Activated B cell treated with CpG ODN at 0.5 μM for 24 hours (primary cell): ENCODE measurements at regions of chr14 and their contacts with region 1.

Region 1: DNA sequence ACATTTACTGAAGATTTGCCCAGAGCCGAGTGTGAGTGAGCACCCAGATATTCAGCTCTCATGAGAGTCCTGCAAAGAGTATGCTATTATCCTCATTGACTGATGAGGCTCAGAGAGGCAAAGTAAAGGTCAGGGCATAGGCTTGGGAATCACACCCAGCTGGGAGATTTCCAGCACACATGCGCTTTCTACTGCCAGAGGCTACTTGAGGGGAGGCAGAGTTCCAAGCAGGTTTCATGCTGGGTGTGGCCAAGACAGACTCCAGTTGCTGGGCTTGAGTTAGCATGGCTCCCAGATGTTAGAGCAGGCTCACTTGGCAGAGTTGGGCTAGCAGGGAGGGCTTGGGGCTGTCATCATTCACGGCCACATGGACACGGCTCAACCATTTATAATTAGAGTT is 14.4 kb upstream of the FAM181A start:
- DNase-seq: no peak
- ATAC-seq: no peak
- H3K4me3 Mint-ChIP-seq: no peak overlapping the region
- H3K27ac Mint-ChIP-seq: no peak overlapping the region
- H3K4me1 Mint-ChIP-seq: no peaks in the 10 kb centered on the region
- H3K27me3 Mint-ChIP-seq: peaks cover 6% of the 10 kb centered on the region
- CTCF ChIP-seq: no peak

Region 2: GRCh38 chr14:93901813-93902212 is 11.0 kb before region 1 on chr14:
- CTCF ChIA-PET with region 1: no interaction called
- POLR2A ChIA-PET with region 1: no interaction called
- intact Hi-C with region 1: loop called (anchors 1 kb)
- DNase-seq: no peak
- ATAC-seq: no peak
- H3K4me3 Mint-ChIP-seq: no peak overlapping the region
- H3K27ac Mint-ChIP-seq: no peak overlapping the region
- H3K4me1 Mint-ChIP-seq: no peaks in the 10 kb centered on the region
- H3K27me3 Mint-ChIP-seq: peaks cover 8% of the 10 kb centered on the region
- CTCF ChIP-seq: no peak

Region 3: GRCh38 chr14:93954900-93955849 is 42.4 kb after region 1 on chr14:
- CTCF ChIA-PET with region 1: no interaction called
- POLR2A ChIA-PET with region 1: no interaction called
- intact Hi-C with region 1: no loop called
- DNase-seq: no peak
- ATAC-seq: peak; percentile 34
- H3K4me3 Mint-ChIP-seq: peak overlapping the region; percentile 75
- H3K27ac Mint-ChIP-seq: peak overlapping the region; percentile 76
- H3K4me1 Mint-ChIP-seq: peaks cover 70% of the 10 kb centered on the region
- H3K27me3 Mint-ChIP-seq: no peaks in the 10 kb centered on the region
- CTCF ChIP-seq: no peak